ENCODE measurements at regions of chr13 and their contacts with region 1.

Region 1: DNA sequence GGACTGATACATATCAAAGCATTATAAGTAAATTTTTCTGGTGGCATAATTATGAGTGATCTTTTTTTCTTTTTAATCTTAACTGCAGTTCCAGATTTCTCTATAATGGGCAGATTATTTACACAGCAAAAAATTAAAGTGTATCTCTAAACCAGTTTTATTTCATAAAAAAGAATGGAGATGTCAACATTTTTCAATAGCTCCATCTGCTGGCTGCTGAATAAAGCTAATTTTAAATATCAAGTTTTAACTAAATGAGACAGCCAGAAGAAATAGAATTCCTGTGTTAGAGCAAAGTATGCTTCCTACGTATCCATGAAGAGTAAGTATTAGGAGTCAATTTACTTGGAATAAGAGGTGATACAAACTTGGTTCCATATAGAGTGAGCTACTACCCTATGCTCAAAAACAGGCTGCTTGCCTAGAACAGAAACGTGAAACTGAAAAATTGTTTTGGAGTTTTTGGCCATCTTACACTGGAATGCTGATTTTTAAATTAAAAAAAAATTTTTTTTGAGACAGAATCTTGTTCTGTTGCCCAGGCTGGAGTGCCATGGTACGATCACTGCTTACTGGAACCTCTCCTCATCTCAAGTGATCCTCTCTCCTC is 5.0 kb upstream of the PDS5B start:
- DNase-seq: peak; percentile 47
- ATAC-seq: no peak
- H3K4me3 ChIP-seq: no peak overlapping the region
- H3K27ac ChIP-seq: no peak overlapping the region
- H3K4me1 ChIP-seq: 0 out of 2 replicates have a peak, but pooled peaks cover 2% of the 10 kb centered on the region
- H3K27me3 ChIP-seq: no peaks in the 10 kb centered on the region
- CTCF ChIP-seq: peak; percentile 62
- POLR2A ChIP-seq: no peak
- RAD21 ChIP-seq: peak; percentile 55

Region 2: GRCh38 chr13:32019612-32020233 is 561.6 kb before region 1 on chr13:
- CTCF ChIA-PET with region 1: no interaction called
- POLR2A ChIA-PET with region 1: no interaction called
- dilution Hi-C with region 1: no loop called
- in situ Hi-C with region 1: loop called (anchors 10 kb)
- intact Hi-C with region 1: loop called (anchors 1 kb)
- DNase-seq: peak; percentile 81
- ATAC-seq: peak; percentile 87
- H3K4me3 ChIP-seq: no peak overlapping the region
- H3K27ac ChIP-seq: no peak overlapping the region
- H3K4me1 ChIP-seq: peaks cover 5% of the 10 kb centered on the region; the same call in 1 of the 2 replicates
- H3K27me3 ChIP-seq: peaks cover 1% of the 10 kb centered on the region; the same call in 1 of the 2 replicates
- CTCF ChIP-seq: peak; percentile 84
- POLR2A ChIP-seq: no peak
- RAD21 ChIP-seq: peak; percentile 82

Region 3: GRCh38 chr13:32246468-32246867 is 334.8 kb before region 1 on chr13:
- CTCF ChIA-PET with region 1: no interaction called
- POLR2A ChIA-PET with region 1: no interaction called
- dilution Hi-C with region 1: no loop called
- in situ Hi-C with region 1: no loop called
- intact Hi-C with region 1: loop called (anchors 5 kb)
- DNase-seq: peak; percentile 76
- ATAC-seq: peak; percentile 96
- H3K4me3 ChIP-seq: no peak overlapping the region
- H3K27ac ChIP-seq: no peak overlapping the region
- H3K4me1 ChIP-seq: peaks cover 3% of the 10 kb centered on the region
- H3K27me3 ChIP-seq: no peaks in the 10 kb centered on the region
- CTCF ChIP-seq: peak; percentile 75
- POLR2A ChIP-seq: no peak
- RAD21 ChIP-seq: peak; percentile 75

Region 4: DNA sequence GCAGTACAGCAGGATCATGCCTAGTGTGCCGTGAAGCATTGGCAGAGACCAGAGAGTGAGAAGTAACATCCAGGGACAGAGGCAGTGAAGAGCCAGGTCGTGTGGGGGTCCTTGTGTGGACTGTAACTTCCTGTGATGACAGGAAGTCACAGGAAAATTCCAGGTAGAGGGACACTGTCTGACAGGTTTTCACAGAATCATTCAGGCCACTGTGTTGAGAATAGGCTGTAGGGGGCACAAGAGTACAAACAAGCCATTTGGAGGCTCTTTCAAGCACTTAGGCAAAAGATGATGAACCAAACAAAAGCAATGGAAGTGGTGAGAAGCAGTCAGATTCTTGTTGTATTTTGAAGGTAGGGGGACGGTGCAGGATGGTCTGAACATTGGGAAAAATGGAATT is 199.7 kb before region 1 on chr13:
- CTCF ChIA-PET with region 1: interaction called, 6 read pairs
- POLR2A ChIA-PET with region 1: no interaction called
- dilution Hi-C with region 1: no loop called
- in situ Hi-C with region 1: no loop called
- intact Hi-C with region 1: loop called (anchors 1 kb)
- DNase-seq: peak; percentile 37
- ATAC-seq: 0 out of 2 replicates have a peak, but pooled peaks have one; percentile 65
- H3K4me3 ChIP-seq: no peak overlapping the region
- H3K27ac ChIP-seq: no peak overlapping the region
- H3K4me1 ChIP-seq: no peaks in the 10 kb centered on the region
- H3K27me3 ChIP-seq: no peaks in the 10 kb centered on the region
- CTCF ChIP-seq: peak; percentile 56
- POLR2A ChIP-seq: no peak
- RAD21 ChIP-seq: peak; percentile 55

Region 5: DNA sequence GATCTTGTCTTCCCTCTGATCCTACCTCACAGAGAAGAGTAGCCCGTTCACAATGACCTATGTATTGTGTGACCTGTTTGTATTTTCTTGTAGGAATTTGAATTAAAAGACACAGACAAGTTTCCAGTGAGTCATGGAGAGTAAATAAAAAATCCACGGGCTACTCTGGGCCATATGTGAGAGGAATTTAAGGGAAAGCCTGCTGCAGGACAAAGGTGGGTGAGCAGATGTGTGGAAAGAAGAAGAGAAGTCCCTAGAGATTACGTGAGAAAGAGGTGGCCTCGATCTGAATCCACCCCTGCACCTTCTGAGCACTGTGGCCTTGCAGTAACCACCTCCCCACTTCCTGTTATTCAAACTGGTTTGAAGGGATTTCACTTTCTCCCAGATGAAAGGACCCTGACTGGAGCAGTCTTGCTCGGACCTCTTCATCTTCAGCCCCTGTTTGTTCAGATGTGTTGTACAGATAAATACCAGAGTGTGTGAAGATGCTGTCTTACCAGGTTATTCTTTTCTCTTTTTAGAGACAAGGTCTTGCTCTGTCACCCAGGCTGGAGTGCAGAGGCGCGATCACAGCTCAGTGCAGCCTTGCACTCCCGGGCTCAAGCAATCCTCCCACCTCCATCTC is 210.4 kb after region 1 on chr13:
- CTCF ChIA-PET with region 1: no interaction called
- POLR2A ChIA-PET with region 1: no interaction called
- dilution Hi-C with region 1: no loop called
- in situ Hi-C with region 1: no loop called
- intact Hi-C with region 1: no loop called
- DNase-seq: peak; percentile 35
- ATAC-seq: peak; percentile 51
- H3K4me3 ChIP-seq: no peak overlapping the region
- H3K27ac ChIP-seq: no peak overlapping the region
- H3K4me1 ChIP-seq: peaks cover 2% of the 10 kb centered on the region
- H3K27me3 ChIP-seq: no peaks in the 10 kb centered on the region
- CTCF ChIP-seq: no peak
- POLR2A ChIP-seq: no peak
- RAD21 ChIP-seq: no peak